ENCODE measurements at regions of chr7 and their contacts with region 1.

Region 1: GRCh38 chr7:111508387-111508786 is 53.9 kb downstream of the IMMP2L start:
- DNase-seq: no peak
- H3K4me3 ChIP-seq: no peak overlapping the region
- H3K27ac ChIP-seq: no peak overlapping the region
- H3K4me1 ChIP-seq: no peaks in the 10 kb centered on the region
- H3K27me3 ChIP-seq: no peaks in the 10 kb centered on the region
- CTCF ChIP-seq: no peak

Region 2: DNA sequence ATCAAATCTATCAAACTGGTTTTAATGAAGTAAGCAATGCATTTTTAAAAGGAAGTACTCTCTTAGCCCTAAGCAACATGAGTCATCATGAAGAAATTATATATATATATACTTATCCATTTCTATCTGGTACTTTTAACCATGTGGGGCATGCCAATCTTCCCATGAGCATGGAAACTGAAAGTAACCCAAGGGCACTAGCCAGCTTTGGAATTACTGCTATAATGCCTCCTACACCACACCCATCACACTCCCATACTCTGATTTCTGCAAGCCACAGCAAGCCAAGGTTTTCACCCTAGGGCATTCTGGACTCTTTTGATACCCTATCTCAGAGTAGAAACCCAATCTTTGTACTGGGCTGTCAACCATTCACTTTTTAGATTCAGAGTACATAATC is 150.7 kb before region 1 on chr7:
- CTCF ChIA-PET with region 1: no interaction called
- POLR2A ChIA-PET with region 1: no interaction called
- intact Hi-C with region 1: loop called (anchors 2 kb)
- DNase-seq: peak; percentile 52 to 77
- H3K4me3 ChIP-seq: no peak overlapping the region
- H3K27ac ChIP-seq: no peak overlapping the region; the same call in 1 of the 2 replicates
- H3K4me1 ChIP-seq: peaks cover 15% of the 10 kb centered on the region
- H3K27me3 ChIP-seq: no peaks in the 10 kb centered on the region
- CTCF ChIP-seq: no peak